ENCODE measurements at regions of chr1 and their contacts with region 1.

Region 1: GRCh38 chr1:116570358-116571200 is at the start of gene CD58:
- DNase-seq: peak; percentile 53 to 89 (median 76)
- ATAC-seq: peak; percentile 75
- H3K4me3 ChIP-seq: peak within 1 kb of the TSS; percentile 88 to 95
- H3K4me3 Mint-ChIP-seq: peak within 1 kb of the TSS; percentile 92
- H3K27ac ChIP-seq: peak within 1 kb of the TSS; percentile 62 to 89
- H3K27ac Mint-ChIP-seq: peak within 1 kb of the TSS; percentile 92
- H3K4me1 ChIP-seq: peaks cover 3% of the 10 kb centered on the region
- H3K4me1 Mint-ChIP-seq: peaks cover 38% of the 10 kb centered on the region
- H3K27me3 ChIP-seq: no peaks in the 10 kb centered on the region
- H3K27me3 Mint-ChIP-seq: no peaks in the 10 kb centered on the region
- CTCF ChIP-seq: peak; percentile 73
- total RNA-seq, gene CD58: 5.4 to 6.6 TPM

Region 2: GRCh38 chr1:116151739-116152576 is 418.6 kb before region 1 on chr1:
- CTCF ChIA-PET with region 1: no interaction called
- POLR2A ChIA-PET with region 1: no interaction called
- intact Hi-C with region 1: loop called in 1 of 2 experiments (anchors 10 kb)
- DNase-seq: peak; percentile 58 to 93 (median 76)
- ATAC-seq: peak; percentile 91
- H3K4me3 ChIP-seq: peak overlapping the region; percentile 35 to 52
- H3K4me3 Mint-ChIP-seq: peak overlapping the region; percentile 79
- H3K27ac ChIP-seq: peak overlapping the region; percentile 17 to 46
- H3K27ac Mint-ChIP-seq: peak overlapping the region; percentile 92
- H3K4me1 ChIP-seq: peaks cover 26% of the 10 kb centered on the region
- H3K4me1 Mint-ChIP-seq: peaks cover 30% of the 10 kb centered on the region
- H3K27me3 ChIP-seq: no peaks in the 10 kb centered on the region
- H3K27me3 Mint-ChIP-seq: no peaks in the 10 kb centered on the region
- CTCF ChIP-seq: peak; percentile 93

Region 3: DNA sequence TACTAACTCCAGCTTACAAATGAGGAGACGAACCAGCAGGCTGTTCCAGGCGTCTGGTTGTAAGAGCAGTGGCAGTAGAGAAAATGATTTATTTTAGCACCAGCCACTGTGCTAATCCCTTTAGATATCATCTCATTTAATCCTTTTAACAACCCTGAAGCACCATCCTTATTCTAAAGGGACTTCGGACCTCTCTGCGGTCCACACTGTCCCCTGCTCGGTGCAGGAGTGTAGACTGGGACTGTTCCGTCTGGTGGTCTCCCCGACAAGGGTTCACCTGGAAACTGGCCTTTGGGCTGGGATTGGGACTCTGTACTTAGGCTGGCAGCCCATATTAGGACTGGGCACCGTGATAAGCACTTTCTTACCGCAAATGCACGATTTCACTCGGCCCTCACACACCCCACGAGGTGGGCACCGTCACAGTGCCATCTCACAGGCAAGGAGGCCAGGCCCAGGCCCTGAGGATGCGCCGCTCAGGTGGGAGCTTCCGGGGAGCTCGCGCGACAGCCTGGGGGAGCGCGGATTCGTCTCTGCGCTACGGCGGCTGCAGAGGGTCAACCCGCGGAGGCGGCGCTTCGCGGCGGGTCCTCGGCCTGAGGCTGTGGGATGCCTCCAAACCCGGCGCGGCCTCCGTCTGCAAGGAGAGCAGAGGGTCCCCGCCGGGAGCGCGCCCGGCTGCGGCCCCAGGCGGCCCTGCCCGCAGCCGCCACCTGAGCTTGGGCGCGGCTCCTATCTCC is 152.3 kb before region 1 on chr1:
- CTCF ChIA-PET with region 1: interaction called, 4 read pairs
- POLR2A ChIA-PET with region 1: no interaction called
- intact Hi-C with region 1: loop called in 1 of 2 experiments (anchors 5 kb)
- DNase-seq: peak; percentile 79 to 93 (median 87)
- ATAC-seq: peak; percentile 98
- H3K4me3 ChIP-seq: peak overlapping the region; percentile 81 to 83
- H3K4me3 Mint-ChIP-seq: peak overlapping the region; percentile 89
- H3K27ac ChIP-seq: peak overlapping the region; percentile 78 to 80
- H3K27ac Mint-ChIP-seq: peak overlapping the region; percentile 96
- H3K4me1 ChIP-seq: peaks cover 29% of the 10 kb centered on the region
- H3K4me1 Mint-ChIP-seq: peaks cover 35% of the 10 kb centered on the region
- H3K27me3 ChIP-seq: no peaks in the 10 kb centered on the region
- H3K27me3 Mint-ChIP-seq: no peaks in the 10 kb centered on the region
- CTCF ChIP-seq: no peak

Region 4: GRCh38 chr1:116556289-116557006 is 14.1 kb before region 1 on chr1:
- CTCF ChIA-PET with region 1: interaction called, 4 read pairs
- POLR2A ChIA-PET with region 1: interaction called, 7 read pairs
- intact Hi-C with region 1: loop called (anchors 1 to 2 kb)
- DNase-seq: peak; percentile 20 to 89 (median 65)
- ATAC-seq: peak; percentile 93
- H3K4me3 ChIP-seq: no peak overlapping the region
- H3K4me3 Mint-ChIP-seq: no peak overlapping the region
- H3K27ac ChIP-seq: peak overlapping the region; percentile 12 to 68
- H3K27ac Mint-ChIP-seq: peak overlapping the region; percentile 73
- H3K4me1 ChIP-seq: no peaks in the 10 kb centered on the region
- H3K4me1 Mint-ChIP-seq: peaks cover 59% of the 10 kb centered on the region
- H3K27me3 ChIP-seq: no peaks in the 10 kb centered on the region
- H3K27me3 Mint-ChIP-seq: no peaks in the 10 kb centered on the region
- CTCF ChIP-seq: no peak

Region 5: GRCh38 chr1:116817582-116818064 is 247.0 kb after region 1 on chr1:
- CTCF ChIA-PET with region 1: interaction called, 5 read pairs
- POLR2A ChIA-PET with region 1: no interaction called
- intact Hi-C with region 1: loop called (anchors 1 to 5 kb)
- DNase-seq: peak; percentile 43 to 89 (median 76)
- ATAC-seq: peak; percentile 71
- H3K4me3 ChIP-seq: no peak overlapping the region
- H3K4me3 Mint-ChIP-seq: peak overlapping the region; percentile 60
- H3K27ac ChIP-seq: no peak overlapping the region
- H3K27ac Mint-ChIP-seq: peak overlapping the region; percentile 70
- H3K4me1 ChIP-seq: peaks cover 19% of the 10 kb centered on the region
- H3K4me1 Mint-ChIP-seq: peaks cover 31% of the 10 kb centered on the region
- H3K27me3 ChIP-seq: no peaks in the 10 kb centered on the region
- H3K27me3 Mint-ChIP-seq: no peaks in the 10 kb centered on the region
- CTCF ChIP-seq: peak; percentile 80

Region 6: GRCh38 chr1:117128323-117129079 is 557.9 kb after region 1 on chr1:
- CTCF ChIA-PET with region 1: interaction called, 14 read pairs
- POLR2A ChIA-PET with region 1: no interaction called
- intact Hi-C with region 1: loop called (anchors 1 to 2 kb)
- DNase-seq: peak in 2 of 9 experiments; percentile 36 to 55
- ATAC-seq: peak; percentile 38
- H3K4me3 ChIP-seq: no peak overlapping the region
- H3K4me3 Mint-ChIP-seq: no peak overlapping the region
- H3K27ac ChIP-seq: no peak overlapping the region
- H3K27ac Mint-ChIP-seq: no peak overlapping the region
- H3K4me1 ChIP-seq: no peaks in the 10 kb centered on the region
- H3K4me1 Mint-ChIP-seq: peaks cover 2% of the 10 kb centered on the region
- H3K27me3 ChIP-seq: peaks cover 0 to 5% of the 10 kb centered on the region in 2 experiments
- H3K27me3 Mint-ChIP-seq: peaks cover 8% of the 10 kb centered on the region
- CTCF ChIP-seq: peak; percentile 54